ENCODE measurements at regions of chr10 and their contacts with region 1.

Region 1: GRCh38 chr10:75187961-75188426 is 22.6 kb upstream of the VDAC2 start:
- DNase-seq: no peak
- H3K4me3 ChIP-seq: no peak overlapping the region
- H3K27ac ChIP-seq: no peak overlapping the region
- H3K27me3 ChIP-seq: no peaks in the 10 kb centered on the region
- CTCF ChIP-seq: peak; percentile 77

Region 2: DNA sequence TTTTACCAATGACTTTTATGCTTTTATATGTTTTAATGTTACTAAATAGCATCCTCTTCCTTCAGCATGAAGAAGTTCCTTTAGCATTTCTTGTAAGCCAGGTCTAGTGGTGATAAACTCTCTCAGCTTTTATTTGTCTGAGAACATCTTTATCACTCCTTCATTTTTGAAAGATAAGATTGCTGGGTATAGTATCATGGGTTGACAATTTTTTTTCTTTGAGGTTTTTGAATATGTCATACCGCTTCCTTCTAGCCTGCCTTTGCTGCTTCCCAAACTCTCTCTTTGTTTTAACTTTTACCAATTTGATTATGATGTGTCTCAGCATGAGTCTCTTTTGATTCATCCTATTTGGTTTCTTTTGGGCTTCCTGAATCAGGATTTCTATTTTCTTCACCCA is 469.8 kb before region 1 on chr10:
- CTCF ChIA-PET with region 1: no interaction called
- POLR2A ChIA-PET with region 1: no interaction called
- DNase-seq: no peak
- H3K4me3 ChIP-seq: no peak overlapping the region
- H3K27ac ChIP-seq: no peak overlapping the region
- H3K27me3 ChIP-seq: no peaks in the 10 kb centered on the region
- CTCF ChIP-seq: no peak

Region 3: GRCh38 chr10:75303045-75303781 is 115.2 kb after region 1 on chr10:
- CTCF ChIA-PET with region 1: interaction called, 11 read pairs
- POLR2A ChIA-PET with region 1: no interaction called
- DNase-seq: no peak
- H3K4me3 ChIP-seq: no peak overlapping the region
- H3K27ac ChIP-seq: no peak overlapping the region
- H3K27me3 ChIP-seq: no peaks in the 10 kb centered on the region
- CTCF ChIP-seq: no peak